ENCODE measurements at regions of chr20 and their contacts with region 1.

Region 1: GRCh38 chr20:56411759-56412472 is at the start of gene CASS4:
- DNase-seq: peak in 1 of 2 donors; percentile 78
- ATAC-seq: peak; percentile 73 to 89 (median 86)
- H3K4me3 ChIP-seq: peak within 1 kb of the TSS; percentile 37
- H3K4me3 Mint-ChIP-seq: peak within 1 kb of the TSS; percentile 89
- H3K27ac ChIP-seq: peak within 1 kb of the TSS; percentile 82
- H3K27ac Mint-ChIP-seq: peak within 1 kb of the TSS; percentile 93 to 95
- H3K4me1 ChIP-seq: peaks cover 41% of the 10 kb centered on the region
- H3K4me1 Mint-ChIP-seq: peaks cover 47% of the 10 kb centered on the region in 2 donors
- H3K27me3 ChIP-seq: no peaks in the 10 kb centered on the region
- H3K27me3 Mint-ChIP-seq: no peaks in the 10 kb centered on the region
- CTCF ChIP-seq: no peak
- total RNA-seq, gene CASS4: 9.3 to 13.8 (median 13.4) TPM

Region 2: DNA sequence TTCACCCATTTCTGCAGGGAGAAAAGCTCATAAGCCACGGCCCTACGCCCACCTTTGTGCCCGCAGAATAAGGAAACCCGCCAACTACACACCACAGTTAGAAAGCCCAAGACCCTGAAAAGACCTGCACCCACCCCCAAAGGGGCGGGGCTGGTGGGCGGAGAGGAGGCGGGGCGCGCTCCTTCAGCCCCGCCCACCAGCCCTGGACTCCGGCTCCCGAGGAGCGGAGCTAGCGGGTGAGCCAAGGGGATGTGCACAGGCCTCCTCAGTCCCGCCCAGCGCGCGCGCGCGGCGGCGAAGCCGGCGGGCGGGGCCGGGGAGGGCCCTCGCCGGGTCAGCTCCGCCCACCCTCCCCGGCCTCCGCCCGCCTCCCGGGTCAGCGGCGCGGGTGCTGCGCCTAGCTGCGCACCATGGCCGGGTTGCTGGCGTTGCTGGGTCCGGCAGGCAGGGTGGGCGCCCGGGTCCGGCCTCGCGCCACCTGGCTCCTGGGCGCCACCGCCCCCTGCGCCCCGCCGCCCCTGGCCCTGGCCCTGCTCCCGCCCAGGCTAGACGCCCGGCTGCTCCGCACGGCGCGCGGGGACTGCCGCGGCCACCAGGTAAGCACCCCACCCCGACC is 53.2 kb before region 1 on chr20 and contains the start of gene FAM210B:
- intact Hi-C with region 1: no loop called
- DNase-seq: peak; percentile 68 to 93
- ATAC-seq: peak; percentile 99
- H3K4me3 ChIP-seq: peak within 1 kb of the TSS; percentile 58
- H3K4me3 Mint-ChIP-seq: peak within 1 kb of the TSS; percentile 91
- H3K27ac ChIP-seq: no peak within 1 kb of the TSS
- H3K27ac Mint-ChIP-seq: peak within 1 kb of the TSS; percentile 36 to 65
- H3K4me1 ChIP-seq: peaks cover 16% of the 10 kb centered on the region
- H3K4me1 Mint-ChIP-seq: peaks cover 7 to 18% of the 10 kb centered on the region in 2 donors
- H3K27me3 ChIP-seq: no peaks in the 10 kb centered on the region
- H3K27me3 Mint-ChIP-seq: peaks cover 0 to 6% of the 10 kb centered on the region in 2 donors
- CTCF ChIP-seq: no peak
- total RNA-seq, gene FAM210B: 6.4 to 11.5 (median 8.8) TPM

Region 3: GRCh38 chr20:56392282-56393137 is 19.4 kb before region 1 on chr20 and contains the start of gene CSTF1:
- intact Hi-C with region 1: loop called (anchors 2 kb)
- DNase-seq: peak; percentile 99 to 100
- ATAC-seq: peak; percentile 88 to 93 (median 89)
- H3K4me3 ChIP-seq: peak within 1 kb of the TSS; percentile 91
- H3K4me3 Mint-ChIP-seq: no peak within 1 kb of the TSS
- H3K27ac ChIP-seq: peak within 1 kb of the TSS; percentile 74
- H3K27ac Mint-ChIP-seq: no peak within 1 kb of the TSS
- H3K4me1 ChIP-seq: peaks cover 21% of the 10 kb centered on the region
- H3K4me1 Mint-ChIP-seq: peaks cover 12 to 23% of the 10 kb centered on the region in 2 donors
- H3K27me3 ChIP-seq: no peaks in the 10 kb centered on the region
- H3K27me3 Mint-ChIP-seq: no peaks in the 10 kb centered on the region
- CTCF ChIP-seq: no peak
- total RNA-seq, gene CSTF1: 15.8 to 24.3 (median 18.5) TPM

Region 4: DNA sequence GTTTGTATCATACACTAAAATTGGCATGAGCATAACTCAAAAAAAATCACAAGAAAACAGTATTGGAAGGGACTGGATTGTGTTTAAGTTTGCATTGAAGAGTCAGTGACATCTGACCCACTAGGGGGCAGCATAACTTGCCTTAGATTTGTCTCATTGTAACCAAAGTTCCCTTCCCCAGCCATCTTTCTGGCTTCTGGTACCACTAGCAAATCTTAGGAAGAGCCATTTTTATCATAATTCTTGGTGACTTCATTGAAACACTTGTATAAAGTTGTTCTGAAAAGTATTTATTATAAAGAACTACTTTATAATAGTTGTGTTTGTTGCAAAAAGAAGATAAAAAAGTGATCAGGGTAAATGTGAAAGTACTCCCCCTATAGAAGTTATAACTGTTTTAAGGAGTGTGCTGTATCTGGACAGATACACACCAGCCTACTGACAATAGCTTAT is 11.8 kb before region 1 on chr20:
- intact Hi-C with region 1: loop called (anchors 1 kb)
- DNase-seq: peak in 1 of 2 donors; percentile 90
- ATAC-seq: peak; percentile 82 to 97 (median 83)
- H3K4me3 ChIP-seq: no peak overlapping the region
- H3K4me3 Mint-ChIP-seq: no peak overlapping the region
- H3K27ac ChIP-seq: no peak overlapping the region
- H3K27ac Mint-ChIP-seq: peak overlapping the region; percentile 80
- H3K4me1 ChIP-seq: no peaks in the 10 kb centered on the region
- H3K4me1 Mint-ChIP-seq: peaks cover 8 to 13% of the 10 kb centered on the region in 2 donors
- H3K27me3 ChIP-seq: no peaks in the 10 kb centered on the region
- H3K27me3 Mint-ChIP-seq: no peaks in the 10 kb centered on the region
- CTCF ChIP-seq: peak; percentile 96

Region 5: DNA sequence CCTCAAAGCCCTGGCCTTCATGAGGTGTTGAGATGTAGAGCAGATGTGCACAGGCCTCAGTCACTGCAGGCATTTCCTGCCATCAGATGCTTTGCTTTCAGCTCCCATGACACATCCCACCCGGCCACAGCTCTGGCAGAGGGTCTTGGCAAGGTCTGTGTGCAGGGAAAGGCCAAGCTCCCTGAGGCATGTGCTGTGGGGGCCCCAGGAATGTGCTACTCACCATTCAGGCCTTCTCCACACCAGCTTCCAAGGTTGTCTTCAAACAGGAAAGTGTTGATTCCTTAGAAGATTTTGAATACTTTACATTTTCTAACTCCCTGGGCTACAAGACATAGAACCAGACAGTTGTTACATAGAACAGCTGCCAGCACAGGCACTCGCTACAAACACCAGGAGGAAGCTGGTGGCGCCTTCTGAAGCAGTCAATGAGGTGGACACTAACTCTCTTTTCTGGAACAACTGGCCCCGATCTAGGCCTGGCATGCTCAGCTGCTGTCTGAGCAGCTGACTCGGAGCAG is 27.9 kb after region 1 on chr20:
- intact Hi-C with region 1: loop called (anchors 2 kb)
- DNase-seq: peak in 1 of 2 donors; percentile 38
- ATAC-seq: peak in 1 of 3 donors; percentile 29
- H3K4me3 ChIP-seq: no peak overlapping the region
- H3K4me3 Mint-ChIP-seq: peak overlapping the region; percentile 72
- H3K27ac ChIP-seq: peak overlapping the region; percentile 38
- H3K27ac Mint-ChIP-seq: peak overlapping the region; percentile 77 to 81
- H3K4me1 ChIP-seq: peaks cover 48% of the 10 kb centered on the region
- H3K4me1 Mint-ChIP-seq: peaks cover 42% of the 10 kb centered on the region in 2 donors
- H3K27me3 ChIP-seq: no peaks in the 10 kb centered on the region
- H3K27me3 Mint-ChIP-seq: no peaks in the 10 kb centered on the region
- CTCF ChIP-seq: no peak

Region 6: GRCh38 chr20:56460459-56460858 is 48.5 kb after region 1 on chr20:
- intact Hi-C with region 1: loop called (anchors 5 kb)
- DNase-seq: peak in 1 of 2 donors; percentile 85
- ATAC-seq: peak; percentile 84 to 87 (median 85)
- H3K4me3 ChIP-seq: no peak overlapping the region
- H3K4me3 Mint-ChIP-seq: peak overlapping the region; percentile 50
- H3K27ac ChIP-seq: peak overlapping the region; percentile 77
- H3K27ac Mint-ChIP-seq: peak overlapping the region; percentile 82 to 86
- H3K4me1 ChIP-seq: peaks cover 45% of the 10 kb centered on the region
- H3K4me1 Mint-ChIP-seq: peaks cover 40 to 44% of the 10 kb centered on the region in 2 donors
- H3K27me3 ChIP-seq: no peaks in the 10 kb centered on the region
- H3K27me3 Mint-ChIP-seq: no peaks in the 10 kb centered on the region
- CTCF ChIP-seq: no peak

Measured in natural killer cell (primary cell).